ENCODE measurements at regions of chr3 and their contacts with region 1.

Region 1: DNA sequence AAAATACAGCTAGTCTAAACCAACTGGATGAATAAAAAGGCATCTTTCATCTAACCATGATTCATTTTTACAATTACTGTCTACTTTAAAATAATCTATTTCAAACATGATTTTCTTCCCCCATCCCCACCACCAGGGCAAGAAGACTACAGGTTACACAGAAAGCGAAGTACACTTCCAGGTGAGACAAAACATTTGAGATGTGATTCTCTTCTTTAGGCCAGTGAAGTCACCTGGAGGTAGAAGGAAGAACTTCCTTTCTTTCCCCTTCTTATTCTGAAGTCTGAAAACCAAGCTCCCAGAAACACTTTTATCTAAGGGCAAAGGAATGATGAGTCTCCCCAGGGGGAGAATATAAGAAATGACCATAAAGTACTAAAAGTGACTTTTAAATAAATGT is 36.7 kb downstream of the SHQ1 start:
- DNase-seq: peak in 1 of 9 donors; percentile 15
- ATAC-seq: no peak
- H3K4me3 ChIP-seq: no peak overlapping the region
- H3K4me3 Mint-ChIP-seq: no peak overlapping the region
- H3K27ac ChIP-seq: no peak overlapping the region
- H3K27ac Mint-ChIP-seq: peak overlapping the region in 3 of 9 donors; percentile 18 to 67 (median 58)
- H3K4me1 ChIP-seq: peaks cover 0 to 3% of the 10 kb centered on the region in 2 donors
- H3K4me1 Mint-ChIP-seq: peaks cover 2 to 19% (median 10%) of the 10 kb centered on the region in 7 donors
- H3K27me3 ChIP-seq: no peaks in the 10 kb centered on the region
- H3K27me3 Mint-ChIP-seq: no peaks in the 10 kb centered on the region

Region 2: DNA sequence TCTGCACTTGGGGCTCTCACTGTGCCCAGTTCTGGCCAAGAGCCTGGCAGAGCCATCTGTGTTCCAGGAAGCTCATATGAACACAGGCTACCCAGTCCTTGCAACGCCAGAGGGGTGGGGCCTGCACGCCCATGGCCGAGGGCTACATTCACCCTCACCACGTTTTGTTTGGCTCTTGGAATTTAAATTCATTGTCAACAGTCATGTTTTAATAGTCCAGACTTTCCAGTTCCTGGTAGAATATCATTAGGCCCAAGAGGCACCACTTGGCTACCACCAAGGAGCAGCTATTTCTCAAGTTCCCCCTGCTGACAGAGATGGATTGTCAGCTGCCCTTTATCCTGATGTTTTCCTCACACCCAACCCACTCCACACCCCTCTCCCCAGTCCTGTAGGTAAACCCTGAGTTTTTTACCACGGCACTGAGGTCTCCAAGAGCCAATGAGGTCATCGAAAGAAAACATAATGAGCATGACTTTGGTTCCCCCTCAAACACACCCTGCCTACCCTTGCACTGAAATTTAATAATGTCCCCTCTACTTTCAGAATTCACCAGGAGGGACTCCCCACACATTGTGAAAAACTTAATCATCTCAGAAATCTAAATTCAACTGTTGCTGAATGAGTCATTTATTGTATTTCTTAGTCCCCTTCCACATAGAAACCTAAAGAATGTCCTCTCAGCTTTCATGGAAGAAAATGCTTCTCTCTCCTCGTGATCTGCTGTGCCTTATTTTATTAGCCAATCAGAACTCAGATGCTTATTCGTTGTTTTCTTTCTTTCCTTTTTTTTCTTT is 88.4 kb before region 1 on chr3:
- CTCF ChIA-PET with region 1: no interaction called
- POLR2A ChIA-PET with region 1: no interaction called
- intact Hi-C with region 1: no loop called
- DNase-seq: no peak
- ATAC-seq: no peak
- H3K4me3 ChIP-seq: no peak overlapping the region
- H3K4me3 Mint-ChIP-seq: no peak overlapping the region
- H3K27ac ChIP-seq: no peak overlapping the region
- H3K27ac Mint-ChIP-seq: no peak overlapping the region
- H3K4me1 ChIP-seq: no peaks in the 10 kb centered on the region
- H3K4me1 Mint-ChIP-seq: peaks cover 0 to 9% (median 6%) of the 10 kb centered on the region in 7 donors
- H3K27me3 ChIP-seq: no peaks in the 10 kb centered on the region
- H3K27me3 Mint-ChIP-seq: no peaks in the 10 kb centered on the region

Region 3: GRCh38 chr3:72738752-72739530 is 72.6 kb before region 1 on chr3:
- CTCF ChIA-PET with region 1: interaction called, 8 read pairs
- POLR2A ChIA-PET with region 1: interaction called, 15 read pairs
- intact Hi-C with region 1: no loop called
- DNase-seq: peak; percentile 68 to 84 (median 76)
- ATAC-seq: peak; percentile 93
- H3K4me3 ChIP-seq: peak overlapping the region; percentile 80
- H3K4me3 Mint-ChIP-seq: peak overlapping the region; percentile 81 to 96 (median 94)
- H3K27ac ChIP-seq: peak overlapping the region; percentile 81
- H3K27ac Mint-ChIP-seq: peak overlapping the region; percentile 89 to 99 (median 97)
- H3K4me1 ChIP-seq: peaks cover 4 to 21% of the 10 kb centered on the region in 2 donors
- H3K4me1 Mint-ChIP-seq: peaks cover 15 to 35% (median 32%) of the 10 kb centered on the region in 7 donors
- H3K27me3 ChIP-seq: no peaks in the 10 kb centered on the region
- H3K27me3 Mint-ChIP-seq: peaks cover 0 to 3% (median 0%) of the 10 kb centered on the region in 5 donors

Region 4: DNA sequence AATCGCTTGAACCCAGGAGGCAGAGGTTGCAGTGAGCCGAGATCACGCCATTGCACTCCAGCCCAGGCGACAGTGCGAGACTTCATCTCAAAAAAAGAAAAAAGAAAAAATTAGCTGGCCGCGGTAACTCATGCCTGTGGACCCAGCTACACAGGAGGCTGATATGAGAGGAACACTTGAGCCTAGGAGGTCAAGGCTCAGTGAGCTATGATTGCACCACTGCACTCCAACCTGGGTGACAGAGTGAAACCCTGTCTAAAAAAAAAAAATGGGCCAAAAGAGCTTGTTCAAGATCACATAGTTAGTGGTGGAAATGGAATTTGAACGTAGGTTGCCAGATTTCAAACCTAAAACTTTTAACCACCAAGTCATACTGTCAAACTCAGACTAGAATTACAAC is 138.8 kb after region 1 on chr3:
- CTCF ChIA-PET with region 1: no interaction called
- POLR2A ChIA-PET with region 1: no interaction called
- intact Hi-C with region 1: no loop called
- DNase-seq: no peak
- ATAC-seq: no peak
- H3K4me3 ChIP-seq: no peak overlapping the region
- H3K4me3 Mint-ChIP-seq: no peak overlapping the region
- H3K27ac ChIP-seq: no peak overlapping the region
- H3K27ac Mint-ChIP-seq: peak overlapping the region in 1 of 9 donors; percentile 34
- H3K4me1 ChIP-seq: no peaks in the 10 kb centered on the region
- H3K4me1 Mint-ChIP-seq: peaks cover 0 to 17% (median 11%) of the 10 kb centered on the region in 7 donors
- H3K27me3 ChIP-seq: no peaks in the 10 kb centered on the region
- H3K27me3 Mint-ChIP-seq: peaks cover 0 to 4% (median 0%) of the 10 kb centered on the region in 5 donors

Measured in naive thymus-derived CD4-positive, alpha-beta T cell (primary cell).